PC-9 (cell line): ENCODE measurements at regions of chr12 and their contacts with region 1.

Region 1: GRCh38 chr12:87848248-87848868 is 180.8 kb downstream of the C12orf50 start:
- DNase-seq: peak in 1 of 2 experiments; percentile 2
- H3K4me3 ChIP-seq: no peak overlapping the region
- H3K27ac ChIP-seq: no peak overlapping the region
- H3K4me1 ChIP-seq: no peaks in the 10 kb centered on the region
- H3K27me3 ChIP-seq: no peaks in the 10 kb centered on the region
- CTCF ChIP-seq: peak; percentile 93

Region 2: DNA sequence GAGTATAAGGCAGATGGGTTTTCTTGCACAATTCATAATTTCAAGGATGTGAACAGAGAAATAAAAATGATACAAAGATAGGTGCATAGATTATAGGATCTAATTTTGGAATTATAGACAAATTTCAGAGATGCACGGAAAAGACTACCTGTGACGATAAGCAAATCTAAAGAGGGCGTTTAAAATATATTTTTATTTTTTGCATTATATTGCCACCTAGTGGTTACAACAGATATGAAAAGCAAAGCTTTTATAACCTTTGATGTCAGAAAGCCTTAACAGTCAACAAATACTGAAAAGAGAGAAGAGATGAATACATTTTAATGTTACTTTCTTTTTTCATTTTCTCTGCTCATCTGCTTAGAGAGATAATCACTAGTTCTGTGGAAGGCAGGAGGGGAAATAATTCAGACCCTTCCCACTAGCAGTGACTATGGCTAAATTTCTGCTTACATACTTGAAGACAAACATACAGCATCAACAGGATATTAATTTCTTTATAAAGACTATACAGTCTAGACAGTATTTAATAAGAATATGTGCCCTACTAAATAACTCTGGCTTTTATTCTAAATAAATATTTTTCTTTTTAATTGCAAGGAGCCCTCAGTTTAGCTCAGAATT is 1927.9 kb before region 1 on chr12:
- CTCF ChIA-PET with region 1: no interaction called
- POLR2A ChIA-PET with region 1: no interaction called
- intact Hi-C with region 1: loop called (anchors 10 kb)
- DNase-seq: no peak
- H3K4me3 ChIP-seq: no peak overlapping the region
- H3K27ac ChIP-seq: no peak overlapping the region
- H3K4me1 ChIP-seq: no peaks in the 10 kb centered on the region
- H3K27me3 ChIP-seq: no peaks in the 10 kb centered on the region
- CTCF ChIP-seq: peak; percentile 77

Region 3: DNA sequence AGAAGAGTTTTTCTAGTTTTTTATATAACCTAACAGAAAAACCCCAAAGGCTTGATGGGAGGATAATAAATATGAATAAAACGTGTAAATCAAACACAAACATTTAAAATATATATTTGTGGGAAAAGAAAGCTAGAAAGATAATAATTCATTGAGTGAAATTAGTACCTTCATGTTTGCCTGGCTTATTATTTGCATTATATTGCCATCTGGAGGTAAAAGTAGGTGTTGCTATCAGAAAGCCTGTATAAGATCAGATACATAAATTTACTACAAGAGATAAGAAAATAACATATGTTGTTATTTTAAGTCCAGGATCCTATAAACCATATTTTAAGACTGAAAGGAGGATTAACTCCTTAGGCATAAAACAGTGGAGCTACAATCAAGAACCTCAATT is 1896.5 kb before region 1 on chr12:
- CTCF ChIA-PET with region 1: no interaction called
- POLR2A ChIA-PET with region 1: no interaction called
- intact Hi-C with region 1: loop called (anchors 10 kb)
- DNase-seq: no peak
- H3K4me3 ChIP-seq: no peak overlapping the region
- H3K27ac ChIP-seq: no peak overlapping the region
- H3K4me1 ChIP-seq: no peaks in the 10 kb centered on the region
- H3K27me3 ChIP-seq: no peaks in the 10 kb centered on the region
- CTCF ChIP-seq: peak; percentile 55

Region 4: GRCh38 chr12:87305481-87305880 is 542.9 kb before region 1 on chr12:
- CTCF ChIA-PET with region 1: no interaction called
- POLR2A ChIA-PET with region 1: no interaction called
- intact Hi-C with region 1: no loop called
- DNase-seq: no peak
- H3K4me3 ChIP-seq: no peak overlapping the region
- H3K27ac ChIP-seq: no peak overlapping the region
- H3K4me1 ChIP-seq: no peaks in the 10 kb centered on the region
- H3K27me3 ChIP-seq: no peaks in the 10 kb centered on the region
- CTCF ChIP-seq: no peak

Region 5: GRCh38 chr12:87344699-87345098 is 503.7 kb before region 1 on chr12:
- CTCF ChIA-PET with region 1: no interaction called
- POLR2A ChIA-PET with region 1: no interaction called
- intact Hi-C with region 1: loop called (anchors 10 kb)
- DNase-seq: no peak
- H3K4me3 ChIP-seq: no peak overlapping the region
- H3K27ac ChIP-seq: no peak overlapping the region
- H3K4me1 ChIP-seq: no peaks in the 10 kb centered on the region
- H3K27me3 ChIP-seq: no peaks in the 10 kb centered on the region
- CTCF ChIP-seq: peak; percentile 60

Region 6: DNA sequence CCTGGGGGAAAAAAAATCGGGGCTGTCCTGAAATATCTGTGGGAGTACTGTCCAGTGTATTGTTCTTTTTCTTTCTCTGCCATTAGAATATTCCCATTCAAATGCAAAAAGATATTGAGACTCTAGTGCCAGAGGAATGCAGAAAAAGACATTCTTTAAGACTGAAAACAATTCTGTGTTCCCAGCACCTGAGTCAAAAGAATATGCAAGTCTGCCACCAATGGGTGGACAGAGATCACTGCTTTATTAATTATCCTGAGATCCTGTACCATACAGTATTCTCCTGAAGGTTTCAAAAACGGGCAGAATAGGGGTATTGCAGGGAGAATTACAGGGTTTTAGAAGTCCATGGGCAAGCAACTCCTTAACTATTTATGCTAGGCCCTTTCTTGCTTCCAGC is 181.0 kb before region 1 on chr12:
- CTCF ChIA-PET with region 1: no interaction called
- POLR2A ChIA-PET with region 1: no interaction called
- intact Hi-C with region 1: loop called (anchors 2 kb)
- DNase-seq: no peak
- H3K4me3 ChIP-seq: no peak overlapping the region
- H3K27ac ChIP-seq: no peak overlapping the region
- H3K4me1 ChIP-seq: no peaks in the 10 kb centered on the region
- H3K27me3 ChIP-seq: no peaks in the 10 kb centered on the region
- CTCF ChIP-seq: peak; percentile 53

Region 7: DNA sequence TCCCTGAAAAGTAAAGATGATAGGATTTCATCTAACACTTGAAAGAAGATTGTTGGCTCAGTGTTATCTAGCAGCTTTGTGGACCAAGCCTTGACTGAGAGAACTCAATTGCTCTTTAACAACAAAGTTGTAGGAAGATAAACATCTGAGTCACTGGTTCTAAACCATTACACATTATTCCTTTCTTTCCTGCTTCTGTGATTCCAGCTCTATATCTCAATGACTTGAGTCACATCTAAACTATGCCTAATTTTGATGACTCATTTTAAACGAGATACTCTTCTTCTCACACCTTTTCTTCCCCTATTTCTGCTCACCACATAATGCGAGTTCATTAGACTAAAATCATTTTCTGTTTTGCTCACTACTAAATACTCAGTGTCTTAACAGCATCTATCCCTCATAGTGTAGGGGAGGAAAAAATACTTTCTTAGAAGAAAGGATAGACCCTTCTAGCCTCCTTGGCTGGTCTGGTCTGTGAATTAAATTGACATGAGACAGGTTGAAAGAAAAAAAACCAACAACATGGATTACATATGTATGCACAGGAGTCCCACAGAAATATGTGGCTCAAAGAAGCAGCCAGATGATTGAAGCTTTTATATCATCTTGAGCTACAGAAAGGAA is 20.6 kb before region 1 on chr12:
- CTCF ChIA-PET with region 1: no interaction called
- POLR2A ChIA-PET with region 1: no interaction called
- intact Hi-C with region 1: no loop called
- DNase-seq: peak; percentile 1 to 73
- H3K4me3 ChIP-seq: no peak overlapping the region
- H3K27ac ChIP-seq: peak overlapping the region; percentile 55
- H3K4me1 ChIP-seq: peaks cover 13% of the 10 kb centered on the region
- H3K27me3 ChIP-seq: no peaks in the 10 kb centered on the region
- CTCF ChIP-seq: no peak